CD8-positive, alpha-beta T cell (primary cell): ENCODE measurements at regions of chr13 and their contacts with region 1.

Region 1: GRCh38 chr13:27251166-27252091 is at the start of gene RPL21:
- DNase-seq: peak; percentile 85 to 98 (median 91)
- ATAC-seq: peak; percentile 88
- H3K4me3 ChIP-seq: peak within 1 kb of the TSS; percentile 88 to 93
- H3K4me3 Mint-ChIP-seq: peak within 1 kb of the TSS; percentile 99
- H3K27ac ChIP-seq: peak within 1 kb of the TSS; percentile 96 to 98
- H3K27ac Mint-ChIP-seq: peak within 1 kb of the TSS; percentile 100
- H3K4me1 ChIP-seq: peaks cover 30% of the 10 kb centered on the region
- H3K4me1 Mint-ChIP-seq: peaks cover 57% of the 10 kb centered on the region
- H3K27me3 ChIP-seq: no peaks in the 10 kb centered on the region
- H3K27me3 Mint-ChIP-seq: no peaks in the 10 kb centered on the region
- CTCF ChIP-seq: no peak
- total RNA-seq, gene RPL21: 2,340 to 2,437 TPM

Region 2: GRCh38 chr13:25301347-25302047 is 1949.9 kb before region 1 on chr13 and contains the start of gene NUP58:
- CTCF ChIA-PET with region 1: no interaction called
- POLR2A ChIA-PET with region 1: no interaction called
- intact Hi-C with region 1: loop called (anchors 2 to 5 kb)
- DNase-seq: peak; percentile 83 to 98 (median 93)
- ATAC-seq: peak; percentile 99
- H3K4me3 ChIP-seq: peak within 1 kb of the TSS; percentile 81 to 84
- H3K4me3 Mint-ChIP-seq: peak within 1 kb of the TSS; percentile 95
- H3K27ac ChIP-seq: peak within 1 kb of the TSS; percentile 83 to 92
- H3K27ac Mint-ChIP-seq: peak within 1 kb of the TSS; percentile 94
- H3K4me1 ChIP-seq: peaks cover 18% of the 10 kb centered on the region
- H3K4me1 Mint-ChIP-seq: peaks cover 46% of the 10 kb centered on the region
- H3K27me3 ChIP-seq: peaks cover 0 to 5% of the 10 kb centered on the region in 2 experiments
- H3K27me3 Mint-ChIP-seq: peaks cover 8% of the 10 kb centered on the region
- CTCF ChIP-seq: no peak
- total RNA-seq, gene NUP58: 73.2 to 78.9 TPM

Region 3: DNA sequence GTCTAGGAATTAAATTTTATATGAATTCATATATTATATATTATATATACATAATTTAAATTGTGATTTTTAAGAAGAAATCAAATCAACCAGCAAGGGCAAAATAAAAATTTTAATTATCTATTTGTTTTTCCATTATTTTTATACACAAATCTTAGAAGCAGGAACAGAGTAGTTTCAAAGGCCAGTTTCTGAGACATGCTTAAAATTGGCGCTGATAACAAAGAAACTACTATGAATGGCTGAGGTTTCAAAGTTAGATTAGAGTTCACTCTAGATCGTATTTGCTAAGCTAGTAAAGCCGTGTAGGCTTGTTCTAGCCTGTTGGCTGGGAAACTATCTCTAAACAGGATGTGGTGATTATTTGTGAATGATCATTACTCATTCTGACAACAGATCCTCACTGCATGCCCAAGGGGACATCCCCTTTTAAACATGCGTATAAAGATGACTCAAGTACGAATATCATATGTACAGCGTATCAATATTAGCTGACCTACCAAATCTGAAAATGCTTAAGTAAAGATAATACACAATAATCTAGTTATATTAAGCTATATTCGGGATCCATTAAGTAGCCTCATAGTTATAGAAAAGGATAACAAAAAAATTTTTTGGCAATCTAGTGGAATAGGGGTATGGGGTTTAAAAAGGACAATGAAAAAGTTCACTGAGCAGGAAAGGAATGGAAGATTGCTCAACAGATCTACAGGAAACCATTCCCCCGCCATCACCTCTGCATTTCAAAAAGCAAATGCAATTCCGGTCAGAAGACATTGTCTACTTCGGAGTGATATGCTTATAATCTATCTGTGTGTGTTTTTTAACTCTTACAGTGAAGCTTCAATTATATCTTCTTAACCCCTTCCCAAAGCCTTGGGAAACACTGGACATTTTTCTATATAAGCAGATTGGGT is 1349.7 kb before region 1 on chr13:
- CTCF ChIA-PET with region 1: no interaction called
- POLR2A ChIA-PET with region 1: no interaction called
- intact Hi-C with region 1: no loop called
- DNase-seq: peak in 5 of 9 experiments; percentile 6 to 89 (median 49)
- ATAC-seq: peak; percentile 88
- H3K4me3 ChIP-seq: no peak overlapping the region
- H3K4me3 Mint-ChIP-seq: no peak overlapping the region
- H3K27ac ChIP-seq: no peak overlapping the region
- H3K27ac Mint-ChIP-seq: peak overlapping the region; percentile 50
- H3K4me1 ChIP-seq: peaks cover 65% of the 10 kb centered on the region
- H3K4me1 Mint-ChIP-seq: peaks cover 39% of the 10 kb centered on the region
- H3K27me3 ChIP-seq: no peaks in the 10 kb centered on the region
- H3K27me3 Mint-ChIP-seq: no peaks in the 10 kb centered on the region
- CTCF ChIP-seq: no peak

Region 4: GRCh38 chr13:27264181-27264580 is 12.8 kb after region 1 on chr13:
- CTCF ChIA-PET with region 1: interaction called, 3 read pairs
- POLR2A ChIA-PET with region 1: interaction called, 3 read pairs
- intact Hi-C with region 1: loop called in 1 of 2 experiments (anchors 1 kb)
- DNase-seq: peak in 1 of 9 experiments; percentile 11
- ATAC-seq: peak; percentile 42
- H3K4me3 ChIP-seq: no peak overlapping the region
- H3K4me3 Mint-ChIP-seq: no peak overlapping the region
- H3K27ac ChIP-seq: no peak overlapping the region
- H3K27ac Mint-ChIP-seq: peak overlapping the region; percentile 9
- H3K4me1 ChIP-seq: peaks cover 35% of the 10 kb centered on the region
- H3K4me1 Mint-ChIP-seq: peaks cover 67% of the 10 kb centered on the region
- H3K27me3 ChIP-seq: no peaks in the 10 kb centered on the region
- H3K27me3 Mint-ChIP-seq: no peaks in the 10 kb centered on the region
- CTCF ChIP-seq: no peak

Region 5: DNA sequence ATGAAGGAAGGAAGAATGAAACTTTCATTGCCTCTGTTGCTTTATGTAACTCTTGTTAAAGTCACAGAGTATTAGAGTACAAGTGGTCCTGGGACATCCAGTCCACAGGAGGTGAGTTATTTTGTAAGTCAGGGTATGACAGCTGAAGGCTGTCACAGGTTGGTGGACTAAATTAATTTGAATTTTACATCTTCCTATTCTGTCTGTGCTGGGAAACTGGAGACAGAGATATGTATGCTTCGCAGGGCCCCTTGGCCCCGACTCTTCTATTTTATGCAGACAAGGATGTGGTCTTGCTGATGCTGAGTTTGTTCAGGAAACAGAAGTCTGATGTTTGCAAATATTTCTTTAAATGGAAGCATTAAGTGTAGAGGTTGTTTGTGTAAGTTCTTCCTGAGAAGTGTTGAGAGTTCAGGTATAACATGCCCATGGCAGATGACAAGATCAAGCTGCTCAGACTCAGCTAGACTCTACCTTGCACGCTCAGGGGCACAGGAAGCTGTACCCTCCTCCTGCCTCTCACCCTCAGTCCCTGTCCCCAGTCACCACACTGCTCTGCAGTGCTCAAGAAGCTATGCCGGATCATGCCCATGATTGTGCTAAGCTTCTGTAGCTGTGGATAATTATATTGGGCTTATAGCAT is 42.6 kb after region 1 on chr13:
- CTCF ChIA-PET with region 1: interaction called, 4 read pairs
- POLR2A ChIA-PET with region 1: interaction called, 4 read pairs
- intact Hi-C with region 1: loop called in 1 of 2 experiments (anchors 2 kb)
- DNase-seq: peak in 6 of 9 experiments; percentile 22 to 66 (median 38)
- ATAC-seq: peak; percentile 86
- H3K4me3 ChIP-seq: peak overlapping the region in 1 of 2 experiments; percentile 26
- H3K4me3 Mint-ChIP-seq: peak overlapping the region; percentile 52
- H3K27ac ChIP-seq: peak overlapping the region; percentile 32 to 38
- H3K27ac Mint-ChIP-seq: peak overlapping the region; percentile 86
- H3K4me1 ChIP-seq: peaks cover 34% of the 10 kb centered on the region
- H3K4me1 Mint-ChIP-seq: peaks cover 29% of the 10 kb centered on the region
- H3K27me3 ChIP-seq: no peaks in the 10 kb centered on the region
- H3K27me3 Mint-ChIP-seq: no peaks in the 10 kb centered on the region
- CTCF ChIP-seq: no peak

Region 6: GRCh38 chr13:27449936-27450828 is 198.8 kb after region 1 on chr13 and contains the start of gene MTIF3:
- CTCF ChIA-PET with region 1: no interaction called
- POLR2A ChIA-PET with region 1: interaction called, 3 read pairs
- intact Hi-C with region 1: loop called (anchors 1 to 5 kb)
- DNase-seq: peak; percentile 94 to 99 (median 98)
- ATAC-seq: peak; percentile 81
- H3K4me3 ChIP-seq: peak within 1 kb of the TSS; percentile 82 to 92
- H3K4me3 Mint-ChIP-seq: peak within 1 kb of the TSS; percentile 93
- H3K27ac ChIP-seq: peak within 1 kb of the TSS; percentile 90 to 97
- H3K27ac Mint-ChIP-seq: peak within 1 kb of the TSS; percentile 99
- H3K4me1 ChIP-seq: peaks cover 54% of the 10 kb centered on the region
- H3K4me1 Mint-ChIP-seq: peaks cover 57% of the 10 kb centered on the region
- H3K27me3 ChIP-seq: no peaks in the 10 kb centered on the region
- H3K27me3 Mint-ChIP-seq: no peaks in the 10 kb centered on the region
- CTCF ChIP-seq: no peak
- total RNA-seq, gene MTIF3: 12.7 to 13.0 TPM

Region 7: DNA sequence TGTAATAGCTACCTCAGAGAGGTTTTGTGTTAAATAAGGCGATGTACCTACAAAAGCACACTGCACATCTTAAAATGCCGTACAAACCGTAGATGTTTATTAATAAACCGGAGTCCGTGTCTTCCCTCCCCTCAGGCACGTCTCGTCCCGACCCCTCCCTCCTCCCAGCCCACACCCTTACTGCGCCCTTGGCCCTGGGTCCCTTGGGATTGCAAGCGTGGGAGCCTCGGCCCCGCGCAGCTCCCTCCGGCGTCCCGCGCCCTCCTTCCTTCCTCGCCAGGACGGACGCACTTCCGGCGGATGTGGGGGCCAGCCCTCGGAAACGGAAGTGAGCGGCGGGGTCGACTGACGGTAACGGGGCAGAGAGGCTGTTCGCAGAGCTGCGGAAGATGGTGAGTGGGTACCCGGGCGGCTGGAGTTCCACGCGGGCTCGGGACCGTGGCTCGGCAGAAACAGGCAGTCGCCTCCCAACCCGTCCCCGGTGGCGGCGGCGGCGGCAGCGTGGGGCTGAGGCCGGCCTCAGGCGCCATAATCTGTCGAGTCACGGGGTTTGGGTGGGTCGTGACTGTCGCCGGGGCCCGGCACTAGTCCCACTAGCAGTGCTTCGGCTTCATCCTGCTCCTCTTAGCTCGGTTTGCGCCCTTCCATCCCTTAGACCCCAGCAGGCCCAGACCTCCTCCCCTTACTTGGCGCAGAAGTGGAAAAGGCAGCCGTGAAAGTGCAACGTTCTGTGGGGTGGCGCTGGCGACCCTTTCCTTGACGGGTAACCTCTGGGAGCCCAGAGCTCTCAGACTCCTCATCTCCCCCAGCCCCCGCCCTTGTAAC is 1407.6 kb after region 1 on chr13 and contains the start of gene POMP:
- CTCF ChIA-PET with region 1: no interaction called
- POLR2A ChIA-PET with region 1: no interaction called
- intact Hi-C with region 1: loop called (anchors 5 kb)
- DNase-seq: peak; percentile 79 to 95 (median 93)
- ATAC-seq: peak; percentile 77
- H3K4me3 ChIP-seq: peak within 1 kb of the TSS; percentile 72 to 73
- H3K4me3 Mint-ChIP-seq: peak within 1 kb of the TSS; percentile 98
- H3K27ac ChIP-seq: peak within 1 kb of the TSS; percentile 85 to 97
- H3K27ac Mint-ChIP-seq: peak within 1 kb of the TSS; percentile 99
- H3K4me1 ChIP-seq: peaks cover 33% of the 10 kb centered on the region
- H3K4me1 Mint-ChIP-seq: peaks cover 62% of the 10 kb centered on the region
- H3K27me3 ChIP-seq: no peaks in the 10 kb centered on the region
- H3K27me3 Mint-ChIP-seq: no peaks in the 10 kb centered on the region
- CTCF ChIP-seq: no peak
- total RNA-seq, gene POMP: 34.7 to 38.0 TPM